Sciatic nerve (tissue), 2 donors: ENCODE measurements at regions of chr3 and their contacts with region 1.

Region 1: DNA sequence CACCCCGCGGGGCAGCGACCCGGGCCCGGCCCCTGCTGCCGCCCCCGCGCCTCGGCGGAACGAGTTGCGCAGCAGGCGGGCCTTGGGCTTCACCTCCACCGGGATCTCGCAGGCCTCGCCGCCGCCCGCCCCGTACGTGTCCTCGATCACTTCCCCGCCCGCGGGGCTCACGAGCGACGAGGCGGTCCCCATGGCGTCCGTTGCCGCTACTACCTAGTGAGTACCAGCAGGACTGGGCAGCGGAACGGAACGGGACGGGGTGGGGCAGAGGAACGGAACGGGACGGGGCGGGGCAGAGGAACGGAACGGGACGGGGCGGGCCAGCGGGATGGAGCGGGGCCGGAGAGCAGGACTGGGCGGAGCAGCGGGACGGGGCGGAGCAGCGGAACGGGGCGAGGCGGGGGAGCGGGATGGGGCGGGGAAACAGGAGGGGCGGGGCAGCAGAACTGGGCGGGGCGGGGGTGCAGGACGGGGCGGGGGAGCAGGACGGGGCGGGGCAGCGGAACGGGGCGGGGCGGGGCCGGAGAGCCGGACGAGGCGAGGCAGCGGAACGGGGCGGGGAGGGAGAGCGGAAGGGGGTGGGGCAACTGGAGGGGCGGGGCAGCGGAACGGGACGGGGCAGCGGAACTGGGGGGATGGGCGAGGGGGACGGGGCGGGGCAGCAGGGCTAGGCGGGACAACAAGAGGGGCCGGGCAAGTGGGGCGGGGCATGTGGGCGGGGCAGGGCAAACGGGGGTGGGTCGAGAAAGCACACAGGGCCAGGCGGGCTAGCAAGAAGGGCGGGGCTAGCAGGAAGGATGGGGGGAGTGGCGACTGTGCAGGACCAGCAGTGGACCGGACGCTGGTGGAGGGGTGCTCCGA is at the start of gene NPHP3:
- DNase-seq: peak; percentile 99
- ATAC-seq: peak; percentile 96
- total RNA-seq, gene NPHP3: 58.0 TPM

Region 2: DNA sequence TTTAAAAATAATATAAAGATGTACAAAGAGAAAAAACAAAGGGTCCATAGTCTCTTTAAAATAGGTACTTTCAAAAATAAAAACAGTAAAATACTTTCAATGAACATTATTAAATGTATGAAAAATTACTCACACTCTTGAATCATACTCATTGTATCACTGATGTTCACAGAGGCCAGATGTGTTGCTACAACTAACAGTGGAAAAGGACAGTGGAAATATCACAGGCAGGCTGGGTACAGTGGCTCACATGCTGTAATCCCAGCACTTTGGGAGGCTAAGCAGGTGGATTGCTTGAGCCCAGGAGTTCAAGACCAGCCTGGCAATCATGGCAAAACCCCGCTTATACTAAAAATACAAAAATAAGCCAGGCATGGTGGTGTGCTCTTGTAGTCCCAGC is 27.0 kb before region 1 on chr3:
- intact Hi-C with region 1: no loop called
- DNase-seq: no peak
- ATAC-seq: no peak

Region 3: GRCh38 chr3:132773071-132773619 is 50.8 kb after region 1 on chr3:
- intact Hi-C with region 1: no loop called
- DNase-seq: no peak
- ATAC-seq: no peak

Region 4: DNA sequence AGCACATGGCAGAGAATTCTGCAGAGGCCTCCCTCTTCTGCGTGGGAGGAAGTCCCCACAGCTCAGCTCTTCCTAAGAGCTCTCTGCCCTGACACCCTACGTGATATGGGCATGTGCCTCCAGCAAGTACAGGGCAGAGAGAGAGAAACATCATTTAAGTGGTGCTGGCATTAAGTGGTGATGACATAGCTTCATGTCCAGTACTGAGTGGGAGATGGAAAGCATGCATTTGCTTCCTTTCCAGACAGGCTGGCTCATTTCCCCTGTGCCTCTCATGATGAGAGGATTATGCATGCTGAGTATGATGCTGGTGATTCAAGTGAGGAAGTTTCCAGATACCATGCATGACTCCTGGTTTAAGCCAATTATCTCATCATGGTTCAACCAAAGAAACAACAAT is 704.3 kb after region 1 on chr3:
- intact Hi-C with region 1: loop called (anchors 10 kb)
- DNase-seq: no peak
- ATAC-seq: no peak